ENCODE measurements at regions of chr3 and their contacts with region 1.

Region 1: GRCh38 chr3:119033393-119034255 is 1.0 kb downstream of the IGSF11 start:
- DNase-seq: no peak
- H3K4me3 ChIP-seq: peak overlapping the region in 1 of 2 donors; percentile 46
- H3K27ac ChIP-seq: no peak overlapping the region
- H3K4me1 ChIP-seq: peaks cover 6% of the 10 kb centered on the region
- H3K27me3 ChIP-seq: no peaks in the 10 kb centered on the region
- CTCF ChIP-seq: no peak
- POLR2A ChIP-seq: no peak

Region 2: DNA sequence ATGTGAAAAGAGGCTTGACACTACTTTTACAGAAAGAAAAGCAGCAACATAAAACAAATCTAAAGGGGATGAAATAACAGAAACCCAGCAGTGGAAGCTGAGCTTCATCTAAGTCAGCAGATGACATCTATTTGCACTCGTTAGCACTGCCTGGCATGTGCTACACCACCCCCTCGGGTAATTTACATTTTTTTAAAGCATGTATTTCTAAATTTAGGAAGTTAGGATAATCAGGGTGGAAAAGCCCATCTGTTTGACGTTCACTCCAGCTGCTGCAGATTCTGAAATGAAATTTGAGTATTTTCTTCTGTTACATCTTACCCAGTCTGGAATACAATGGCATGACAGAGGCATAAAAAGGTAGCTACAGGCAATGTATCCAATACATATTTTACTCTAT is 19.7 kb before region 1 on chr3:
- intact Hi-C with region 1: loop called (anchors 2 kb)
- DNase-seq: no peak
- H3K4me3 ChIP-seq: no peak overlapping the region
- H3K27ac ChIP-seq: no peak overlapping the region
- H3K4me1 ChIP-seq: no peaks in the 10 kb centered on the region
- H3K27me3 ChIP-seq: no peaks in the 10 kb centered on the region
- CTCF ChIP-seq: no peak
- POLR2A ChIP-seq: no peak

Measured in vagina (tissue), 2 donors.